ENCODE measurements at regions of chr6 and their contacts with region 1.

Region 1: DNA sequence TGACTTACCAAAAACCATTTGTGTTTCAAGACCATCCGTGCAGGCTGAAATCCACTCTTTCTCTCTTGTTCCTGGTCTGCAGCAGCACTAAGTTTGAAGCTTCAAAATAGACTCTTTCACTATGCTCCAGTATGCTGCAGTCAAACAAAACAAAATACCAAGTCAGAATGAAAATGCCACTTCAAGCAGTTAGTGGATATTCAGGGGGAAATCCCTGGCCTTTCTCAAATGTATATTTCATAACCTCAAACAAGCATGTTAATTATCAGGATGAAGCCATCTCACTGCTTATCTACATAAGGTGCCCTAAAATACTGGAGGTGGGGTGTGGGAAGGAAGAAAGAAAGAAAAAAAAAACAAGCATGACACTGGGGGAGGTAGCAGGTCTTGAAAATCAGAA is 103.5 kb downstream of the ATXN1 start:
- DNase-seq: no peak
- H3K4me3 Mint-ChIP-seq: peak overlapping the region; percentile 45
- H3K27ac Mint-ChIP-seq: peak overlapping the region; percentile 94
- H3K4me1 Mint-ChIP-seq: peaks cover 72% of the 10 kb centered on the region
- H3K27me3 Mint-ChIP-seq: no peaks in the 10 kb centered on the region

Region 2: GRCh38 chr6:16391451-16391912 is 266.3 kb before region 1 on chr6:
- CTCF ChIA-PET with region 1: no interaction called
- POLR2A ChIA-PET with region 1: no interaction called
- DNase-seq: no peak
- H3K4me3 Mint-ChIP-seq: no peak overlapping the region
- H3K27ac Mint-ChIP-seq: no peak overlapping the region
- H3K4me1 Mint-ChIP-seq: peaks cover 2% of the 10 kb centered on the region
- H3K27me3 Mint-ChIP-seq: no peaks in the 10 kb centered on the region

Region 3: GRCh38 chr6:16670183-16670582 is 12.4 kb after region 1 on chr6:
- CTCF ChIA-PET with region 1: interaction called, 4 read pairs
- POLR2A ChIA-PET with region 1: interaction called, 60 read pairs
- DNase-seq: peak; percentile 29
- H3K4me3 Mint-ChIP-seq: peak overlapping the region; percentile 60
- H3K27ac Mint-ChIP-seq: peak overlapping the region; percentile 96
- H3K4me1 Mint-ChIP-seq: peaks cover 79% of the 10 kb centered on the region
- H3K27me3 Mint-ChIP-seq: no peaks in the 10 kb centered on the region

Region 4: DNA sequence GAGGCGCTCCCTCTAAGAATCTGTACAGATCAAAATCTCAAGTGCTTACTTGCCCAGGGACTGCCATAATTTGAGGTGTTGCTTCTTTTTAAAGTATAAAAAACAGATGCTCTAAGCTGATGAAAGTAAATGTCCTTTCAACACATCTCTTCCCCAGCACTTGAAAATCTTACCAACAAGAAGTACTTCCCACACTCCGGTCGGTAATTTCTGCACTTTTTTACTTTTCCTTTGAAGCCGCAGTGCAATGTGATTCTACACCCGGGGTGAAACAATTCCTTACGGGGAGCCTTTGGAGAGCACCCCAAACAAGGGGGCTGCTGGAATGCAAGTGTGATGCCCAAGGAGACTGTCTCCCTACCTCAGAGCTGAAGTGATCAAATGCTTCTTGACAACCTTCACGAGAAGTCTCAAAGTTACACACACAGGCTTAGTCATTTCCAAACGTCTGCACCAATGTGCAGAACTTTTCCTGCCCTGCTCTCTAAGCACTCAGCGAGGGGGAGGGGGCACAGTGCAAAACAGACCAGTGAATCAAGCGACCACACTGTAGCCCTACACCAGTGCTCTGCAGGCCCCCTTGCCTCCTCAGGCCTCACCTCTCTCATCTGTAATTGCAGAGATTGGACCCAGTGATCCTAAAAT is 46.8 kb after region 1 on chr6:
- CTCF ChIA-PET with region 1: interaction called, 27 read pairs
- POLR2A ChIA-PET with region 1: interaction called, 62 read pairs
- DNase-seq: peak; percentile 71
- H3K4me3 Mint-ChIP-seq: peak overlapping the region; percentile 80
- H3K27ac Mint-ChIP-seq: peak overlapping the region; percentile 89
- H3K4me1 Mint-ChIP-seq: peaks cover 79% of the 10 kb centered on the region
- H3K27me3 Mint-ChIP-seq: no peaks in the 10 kb centered on the region

Region 5: GRCh38 chr6:16712931-16713484 is 55.2 kb after region 1 on chr6:
- CTCF ChIA-PET with region 1: no interaction called
- POLR2A ChIA-PET with region 1: interaction called, 10 read pairs
- DNase-seq: no peak
- H3K4me3 Mint-ChIP-seq: peak overlapping the region; percentile 66
- H3K27ac Mint-ChIP-seq: peak overlapping the region; percentile 97
- H3K4me1 Mint-ChIP-seq: peaks cover 70% of the 10 kb centered on the region
- H3K27me3 Mint-ChIP-seq: no peaks in the 10 kb centered on the region

Region 6: DNA sequence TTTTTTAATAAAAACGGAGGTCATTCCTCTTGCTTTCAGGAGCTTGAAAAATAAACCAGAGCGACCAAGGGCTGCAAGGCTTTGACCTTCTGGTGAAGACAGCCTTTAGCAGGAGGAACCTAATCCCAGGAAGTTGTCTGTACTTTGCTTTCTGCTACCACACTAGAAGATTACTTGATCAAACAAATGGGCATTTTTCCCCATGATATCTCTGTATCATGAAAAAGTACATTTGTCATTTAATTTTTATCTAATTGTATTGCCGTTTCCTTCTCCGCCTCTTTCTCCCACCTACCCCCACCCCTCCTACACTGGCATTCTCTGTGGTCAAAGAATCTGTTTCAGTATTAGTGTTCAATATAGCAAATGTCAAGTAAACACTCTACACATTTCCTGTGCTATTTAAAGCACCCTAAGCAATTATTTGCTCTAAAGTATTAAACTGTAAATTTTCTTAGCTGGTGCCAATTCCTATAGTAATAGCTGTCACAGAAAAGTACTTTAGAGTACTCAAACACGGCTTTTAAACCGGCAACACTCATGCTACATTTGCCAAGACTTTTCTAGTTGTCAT is 73.8 kb after region 1 on chr6:
- CTCF ChIA-PET with region 1: interaction called, 11 read pairs
- POLR2A ChIA-PET with region 1: interaction called, 13 read pairs
- DNase-seq: peak; percentile 63
- H3K4me3 Mint-ChIP-seq: peak overlapping the region; percentile 61
- H3K27ac Mint-ChIP-seq: peak overlapping the region; percentile 86
- H3K4me1 Mint-ChIP-seq: peaks cover 75% of the 10 kb centered on the region
- H3K27me3 Mint-ChIP-seq: no peaks in the 10 kb centered on the region